ENCODE measurements at regions of chr17 and their contacts with region 1.

Region 1: DNA sequence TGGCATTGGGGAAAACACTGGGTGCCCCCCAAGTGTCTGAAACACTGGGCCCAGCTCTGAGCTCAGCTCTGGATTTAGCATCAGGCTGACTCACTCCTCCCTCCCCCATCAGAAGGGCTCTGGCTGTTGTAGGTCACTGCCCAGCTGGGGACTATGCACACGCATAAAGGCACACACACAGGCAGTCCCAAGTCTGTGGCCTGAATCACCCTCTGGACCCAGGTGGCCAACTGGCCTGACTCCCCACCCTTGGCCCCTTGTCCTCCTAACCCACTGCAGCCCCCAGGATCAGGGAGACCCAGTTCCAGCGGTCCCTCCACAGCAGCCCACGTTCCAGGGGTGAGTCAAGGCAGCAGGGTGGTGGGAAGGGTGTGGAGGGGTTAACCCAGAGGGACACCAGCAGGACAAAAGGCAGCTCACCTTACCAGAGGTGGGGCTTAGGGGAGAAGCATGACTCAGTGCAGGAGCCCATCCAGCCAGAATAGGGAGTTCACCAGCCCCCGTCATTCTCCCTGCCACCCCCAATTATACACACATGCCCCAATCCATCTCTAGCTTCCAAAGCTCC is 47.0 kb downstream of the MYO18A start:
- DNase-seq: no peak
- H3K4me3 ChIP-seq: no peak overlapping the region
- H3K27ac ChIP-seq: no peak overlapping the region
- H3K4me1 ChIP-seq: no peaks in the 10 kb centered on the region
- H3K27me3 ChIP-seq: no peaks in the 10 kb centered on the region
- CTCF ChIP-seq: no peak

Region 2: DNA sequence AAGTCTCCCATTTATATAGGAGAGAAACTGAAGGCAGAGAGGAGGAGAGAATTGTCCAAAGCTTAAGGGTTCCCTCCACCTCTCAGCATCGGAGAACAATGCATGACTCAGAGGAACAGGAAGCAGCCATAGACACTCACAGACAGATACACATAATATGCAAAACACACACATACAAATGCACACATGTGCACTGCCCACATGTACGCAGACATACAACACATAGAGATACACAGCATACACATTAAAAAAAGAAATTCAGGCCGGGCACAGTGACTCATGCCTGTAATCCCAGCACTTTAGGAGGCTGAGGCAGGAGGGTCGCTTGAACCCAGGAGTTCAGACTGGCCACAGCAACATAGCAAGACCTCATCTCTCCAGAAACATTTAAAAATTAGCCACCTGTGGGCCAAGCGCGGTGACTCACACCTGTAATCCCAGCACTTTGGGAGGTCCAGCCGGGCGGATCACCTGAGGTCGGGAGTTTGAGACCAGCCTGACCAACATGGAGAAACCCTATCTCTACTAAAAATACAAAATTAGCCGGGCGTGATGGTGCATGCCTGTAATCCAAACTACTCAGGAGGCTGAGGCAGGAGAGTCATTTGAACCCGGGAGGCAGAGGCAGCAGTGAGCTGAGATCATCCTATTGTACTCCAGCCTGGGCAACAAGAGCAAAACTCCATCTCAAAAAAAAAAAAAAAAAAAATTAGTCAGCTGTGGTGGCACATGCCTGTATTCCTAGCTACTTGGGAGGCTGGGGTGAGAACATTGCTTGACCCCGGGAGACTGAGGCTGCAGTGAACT is 267.1 kb before region 1 on chr17:
- CTCF ChIA-PET with region 1: no interaction called
- POLR2A ChIA-PET with region 1: no interaction called
- intact Hi-C with region 1: no loop called
- DNase-seq: peak; percentile 36
- H3K4me3 ChIP-seq: no peak overlapping the region
- H3K27ac ChIP-seq: no peak overlapping the region
- H3K4me1 ChIP-seq: no peaks in the 10 kb centered on the region
- H3K27me3 ChIP-seq: no peaks in the 10 kb centered on the region
- CTCF ChIP-seq: no peak

Region 3: DNA sequence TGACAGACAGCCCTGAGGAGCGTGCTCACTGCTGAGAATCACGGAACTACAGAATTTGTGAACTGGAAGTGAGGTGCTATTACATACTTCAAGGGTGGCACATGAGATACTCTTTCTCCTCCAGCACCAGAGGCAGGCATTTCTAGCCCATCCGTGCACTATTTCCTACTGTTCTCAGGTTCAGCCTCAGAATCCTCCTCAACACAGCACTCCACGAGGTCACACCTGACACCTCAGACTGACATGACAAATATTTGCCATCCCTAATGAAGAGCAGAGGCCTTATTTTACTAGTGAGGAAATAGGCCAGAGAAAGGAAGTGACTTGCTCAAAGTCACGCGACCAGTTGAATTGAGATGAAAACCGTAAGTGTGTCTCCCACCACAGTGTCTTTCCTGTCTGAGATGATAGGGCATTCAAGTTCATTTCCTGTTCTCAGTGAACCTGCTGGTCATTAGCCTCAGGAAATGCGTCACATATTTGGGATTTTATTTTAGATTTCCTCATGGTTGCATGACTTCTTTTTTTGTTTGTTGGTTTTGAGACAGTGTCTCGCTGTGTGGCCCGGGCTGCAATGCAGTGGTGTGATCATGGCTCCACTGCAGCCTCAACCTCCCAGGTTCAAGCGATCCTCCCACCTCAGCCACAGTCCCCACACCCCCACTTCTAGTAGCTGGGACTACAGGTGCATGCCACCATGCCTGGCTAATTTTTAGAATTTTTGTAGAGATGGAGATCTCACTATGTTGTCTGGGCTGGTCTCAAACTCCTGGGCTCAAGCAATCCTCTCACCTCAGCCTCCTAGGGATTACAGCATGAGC is 150.9 kb before region 1 on chr17:
- CTCF ChIA-PET with region 1: no interaction called
- POLR2A ChIA-PET with region 1: interaction called, 17 read pairs
- intact Hi-C with region 1: no loop called
- DNase-seq: peak; percentile 98
- H3K4me3 ChIP-seq: no peak overlapping the region
- H3K27ac ChIP-seq: peak overlapping the region; percentile 96
- H3K4me1 ChIP-seq: peaks cover 66% of the 10 kb centered on the region
- H3K27me3 ChIP-seq: no peaks in the 10 kb centered on the region
- CTCF ChIP-seq: no peak